A549 (cell line): ENCODE measurements at regions of chr12 and their contacts with region 1.

Region 1: DNA sequence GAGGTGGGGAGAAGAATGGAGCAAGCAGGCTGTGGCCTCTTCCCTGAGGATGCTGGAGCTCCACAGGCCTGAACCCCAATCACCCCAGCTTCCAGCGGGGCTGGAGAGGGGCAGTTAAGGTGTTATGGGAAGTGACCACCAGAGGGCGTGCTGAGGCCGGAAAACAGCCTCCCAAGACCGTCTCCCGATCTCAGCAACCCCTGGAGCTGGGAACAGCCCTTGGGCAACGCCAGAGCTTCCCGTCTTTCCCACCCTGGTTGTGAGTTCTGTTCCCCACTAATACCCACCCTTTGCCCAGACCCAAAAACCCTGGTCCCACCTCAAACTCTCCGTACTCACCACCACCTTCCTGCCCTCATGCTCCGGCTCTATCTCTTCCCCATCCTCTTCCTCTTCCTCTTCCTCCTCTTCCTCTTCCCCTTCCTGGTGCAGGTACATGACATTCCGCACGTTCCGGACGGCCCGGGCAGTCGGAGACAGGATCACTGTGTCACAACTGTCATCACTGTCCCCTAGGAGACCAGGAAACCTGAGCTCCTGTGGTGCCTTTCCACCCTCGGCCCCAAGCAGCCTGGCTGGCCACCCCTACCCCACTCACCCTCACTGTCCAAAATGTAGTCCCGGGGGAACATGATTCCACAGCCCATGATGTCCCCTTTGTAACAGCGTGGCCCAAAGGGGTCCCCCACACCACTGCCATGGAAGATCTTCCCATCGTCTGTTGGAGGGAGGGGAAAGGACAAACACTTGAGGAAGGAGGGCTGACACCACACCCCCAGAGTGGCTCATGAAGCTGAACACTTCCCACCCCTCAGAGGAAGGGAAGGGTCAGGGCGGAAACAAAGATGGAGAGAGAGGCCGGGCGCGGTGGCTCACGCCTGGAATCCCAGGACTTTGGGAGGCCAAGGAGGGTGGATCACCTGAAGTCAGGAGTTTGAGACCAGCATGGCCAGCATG is 12.9 kb downstream of the SPRYD3 start:
- DNase-seq: peak; percentile 80 to 96
- ATAC-seq: peak; percentile 56 to 84
- H3K4me3 ChIP-seq: no peak overlapping the region
- H3K27ac ChIP-seq: peak overlapping the region; percentile 65 to 87
- H3K4me1 ChIP-seq: peaks cover 36% of the 10 kb centered on the region
- CTCF ChIP-seq: peak; percentile 96
- EP300 ChIP-seq: no peak
- POLR2A ChIP-seq: no peak
- RAD21 ChIP-seq: peak; percentile 95 to 98

Region 2: DNA sequence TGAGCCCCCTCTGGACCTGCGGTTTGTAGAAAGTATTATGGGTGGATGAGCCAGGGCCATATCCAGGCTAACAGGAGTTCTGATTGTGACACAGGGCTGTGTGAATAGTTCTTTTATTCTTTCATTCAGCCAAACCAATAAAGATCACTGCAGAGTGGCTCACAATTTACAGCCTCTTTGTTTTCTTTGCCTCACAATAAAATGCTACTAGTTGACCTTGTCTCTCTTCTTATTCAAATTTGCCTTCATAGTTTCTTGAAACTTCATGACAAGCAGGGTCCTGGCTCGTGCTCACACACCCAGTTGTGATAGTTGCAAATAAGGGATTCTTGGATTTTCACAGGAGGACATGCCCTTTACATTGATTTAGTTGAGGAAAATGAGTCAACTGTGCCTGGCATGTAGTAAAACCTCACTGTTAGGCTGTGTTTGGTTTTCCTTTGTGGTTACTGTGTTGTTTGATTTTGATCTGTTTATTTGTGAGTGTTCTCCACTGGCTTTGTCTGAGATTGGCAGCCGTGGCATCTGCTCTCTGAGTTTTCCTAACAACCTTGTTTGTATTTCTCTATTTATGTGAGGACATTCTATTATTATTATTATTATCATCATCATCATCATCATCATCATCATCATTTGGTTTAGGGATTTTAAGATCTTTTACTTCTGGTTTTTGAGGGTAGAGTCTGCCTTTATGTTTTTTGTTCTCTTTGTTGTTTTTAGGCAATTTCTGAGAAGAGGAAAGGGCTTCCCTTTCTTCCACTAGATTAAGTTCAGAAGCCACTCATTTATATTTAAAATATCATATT is 611.6 kb before region 1 on chr12:
- CTCF ChIA-PET with region 1: no interaction called
- POLR2A ChIA-PET with region 1: no interaction called
- DNase-seq: no peak
- ATAC-seq: 0 out of 6 replicates have a peak, but pooled peaks of 1 of the 2 experiments have one; percentile 24
- H3K4me3 ChIP-seq: no peak overlapping the region
- H3K27ac ChIP-seq: no peak overlapping the region
- H3K4me1 ChIP-seq: peaks cover 5% of the 10 kb centered on the region; the same call in 1 of the 3 replicates
- CTCF ChIP-seq: no peak
- EP300 ChIP-seq: no peak
- POLR2A ChIP-seq: no peak
- RAD21 ChIP-seq: no peak

Region 3: DNA sequence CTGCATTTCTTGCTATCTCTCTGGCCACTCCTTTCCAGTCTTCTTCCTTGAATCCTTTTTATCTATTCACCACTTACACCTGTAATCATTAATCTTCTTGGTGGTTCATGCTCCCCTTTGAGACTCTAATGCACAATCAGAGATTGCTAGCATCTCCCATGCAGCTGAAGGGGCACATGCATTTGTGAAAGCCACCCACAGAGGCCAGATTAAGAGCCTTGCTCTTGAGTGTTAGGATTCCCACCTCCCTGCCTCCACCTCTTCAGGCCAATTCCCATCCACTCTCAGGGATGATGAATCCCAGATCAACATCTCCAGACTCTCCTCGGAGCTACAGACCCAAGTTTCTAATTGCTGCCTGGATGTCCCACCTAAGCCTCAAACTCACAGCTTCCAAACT is 136.7 kb before region 1 on chr12:
- CTCF ChIA-PET with region 1: no interaction called
- POLR2A ChIA-PET with region 1: no interaction called
- DNase-seq: no peak
- ATAC-seq: no peak
- H3K4me3 ChIP-seq: no peak overlapping the region
- H3K27ac ChIP-seq: peak overlapping the region; percentile 54 to 96; a peak in 5 of 6 replicates
- H3K4me1 ChIP-seq: peaks cover 51% of the 10 kb centered on the region
- CTCF ChIP-seq: no peak
- EP300 ChIP-seq: no peak
- POLR2A ChIP-seq: no peak
- RAD21 ChIP-seq: no peak

Region 4: DNA sequence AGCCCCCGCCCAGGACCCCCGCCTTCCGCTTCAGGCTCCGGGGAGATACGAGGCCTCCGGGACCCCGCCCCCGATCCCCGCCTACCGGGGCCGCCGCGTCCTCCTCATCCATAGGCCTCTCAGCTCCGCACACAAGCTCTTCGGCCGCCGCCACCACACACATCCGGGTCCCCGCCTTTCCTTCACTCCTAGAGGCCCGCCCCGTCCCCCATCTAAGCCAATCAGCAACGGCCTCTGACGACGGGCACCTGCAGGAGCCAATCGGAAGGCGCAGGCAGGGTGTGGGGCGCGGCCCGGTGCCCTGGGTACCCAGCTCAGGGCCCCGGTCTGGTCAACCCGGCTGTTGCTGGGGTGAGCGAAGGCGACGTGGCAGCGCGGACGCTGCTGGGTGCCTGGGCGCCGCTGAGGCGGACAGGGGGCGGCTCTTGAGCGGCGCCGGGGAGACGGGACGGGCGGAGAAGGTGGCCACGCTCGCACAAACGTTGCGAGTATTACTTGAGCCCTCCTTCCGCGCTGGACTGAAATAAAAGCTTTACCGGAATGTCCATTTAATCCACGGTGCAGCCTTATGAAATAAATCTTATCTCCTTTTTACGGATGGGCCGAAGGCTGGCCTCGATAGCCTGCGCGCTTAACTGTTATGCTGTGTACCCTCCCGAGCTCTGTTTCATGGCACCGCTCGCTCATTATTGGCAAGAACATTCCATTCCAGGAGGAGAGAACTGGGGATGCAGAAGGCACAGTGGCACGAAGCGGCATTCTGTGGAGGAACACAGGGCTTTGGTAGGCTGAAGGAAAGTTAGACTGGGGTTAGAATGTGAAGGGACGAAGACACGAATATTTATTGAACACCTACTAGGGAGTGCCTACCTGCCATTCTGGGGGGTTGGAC is 13.2 kb after region 1 on chr12 and contains the start of gene SPRYD3:
- CTCF ChIA-PET with region 1: interaction called, 1,424 read pairs
- POLR2A ChIA-PET with region 1: interaction called, 13 read pairs
- DNase-seq: peak; percentile 99 to 100
- ATAC-seq: peak; percentile 98 to 99
- H3K4me3 ChIP-seq: peak within 1 kb of the TSS; percentile 56
- H3K27ac ChIP-seq: peak within 1 kb of the TSS; percentile 86 to 94
- H3K4me1 ChIP-seq: peaks cover 10% of the 10 kb centered on the region; the same call in 2 of the 3 replicates
- CTCF ChIP-seq: no peak
- EP300 ChIP-seq: no peak
- POLR2A ChIP-seq: peak; percentile 99
- RAD21 ChIP-seq: no peak
- polyA plus RNA-seq, gene SPRYD3: 26.8 and 28.1 TPM in 2 replicates

Region 5: DNA sequence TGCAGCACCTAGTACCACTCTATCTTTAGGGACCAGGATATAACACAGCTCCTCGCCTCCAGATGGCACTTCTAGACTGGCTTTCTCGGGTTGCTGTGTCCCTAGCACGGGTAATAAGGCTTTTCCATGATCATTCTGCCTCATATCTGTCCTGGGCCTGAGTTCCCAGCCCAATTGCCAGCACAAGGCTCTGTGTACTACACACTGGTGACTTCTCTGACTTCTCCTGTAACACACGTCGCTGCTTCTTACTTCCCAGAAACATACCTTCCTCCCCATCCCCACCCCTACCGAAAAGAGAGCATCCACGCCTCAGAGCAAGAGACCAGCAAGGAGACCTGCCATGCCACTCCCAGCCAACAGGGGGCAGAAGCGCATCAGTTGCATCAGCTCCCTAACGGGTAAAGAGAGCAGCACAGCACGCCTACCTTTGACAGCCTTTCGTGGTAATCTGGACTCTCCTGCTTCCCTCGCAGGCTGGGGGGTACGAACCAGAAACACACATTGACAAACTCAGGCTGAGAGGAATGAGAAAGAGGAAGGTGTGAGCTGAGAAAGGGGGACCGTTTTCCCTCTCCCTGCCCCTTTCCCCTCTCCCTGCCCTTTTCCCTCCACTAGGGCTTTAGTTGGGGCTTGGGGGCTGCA is 93.1 kb after region 1 on chr12:
- CTCF ChIA-PET with region 1: interaction called, 42 read pairs
- POLR2A ChIA-PET with region 1: no interaction called
- DNase-seq: peak; percentile 89 to 96
- ATAC-seq: peak; percentile 97 to 98
- H3K4me3 ChIP-seq: no peak overlapping the region
- H3K27ac ChIP-seq: peak overlapping the region; percentile 55 to 82
- H3K4me1 ChIP-seq: peaks cover 12% of the 10 kb centered on the region
- CTCF ChIP-seq: peak; percentile 93
- EP300 ChIP-seq: no peak
- POLR2A ChIP-seq: no peak
- RAD21 ChIP-seq: peak; percentile 89 to 93

Region 6: DNA sequence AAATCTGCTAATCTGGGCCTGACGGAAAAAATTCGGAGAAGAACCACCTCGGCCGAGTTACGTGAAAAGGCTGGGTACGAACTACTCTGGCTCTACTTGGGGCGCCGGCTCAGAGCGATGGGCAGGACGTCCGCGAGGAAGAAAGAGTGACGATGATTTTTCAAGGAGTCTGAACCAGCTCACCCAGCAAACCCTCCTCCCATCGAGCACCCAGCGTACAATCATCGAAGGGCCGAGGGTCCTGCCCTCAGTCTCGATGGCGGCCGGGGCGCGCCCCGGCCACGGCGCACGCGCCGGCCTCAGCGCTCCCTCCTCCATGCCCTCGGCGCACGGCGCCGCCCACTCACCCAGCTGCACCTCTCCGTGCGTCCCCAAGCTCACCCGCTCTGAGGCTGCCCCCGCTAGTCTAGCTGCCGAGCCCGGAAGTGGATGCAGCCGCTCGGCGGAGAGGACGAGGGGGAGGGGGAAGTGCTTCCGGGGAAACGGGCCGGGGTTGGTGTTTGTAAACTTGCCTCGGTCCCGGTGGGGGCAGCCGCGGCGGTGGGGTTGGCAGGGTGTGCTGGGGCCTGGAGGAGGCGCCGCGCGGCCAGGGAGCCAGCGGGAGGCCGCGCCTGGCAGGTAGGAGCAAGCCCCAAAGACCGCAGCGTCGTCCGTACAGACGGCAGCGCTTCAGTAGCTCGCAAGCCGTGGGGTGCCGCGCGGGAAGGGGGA is 114.1 kb after region 1 on chr12 and contains the starts of genes CSAD and ZNF740:
- CTCF ChIA-PET with region 1: interaction called, 20 read pairs
- POLR2A ChIA-PET with region 1: interaction called, 4 read pairs
- DNase-seq: peak; percentile 98 to 99
- ATAC-seq: peak; percentile 97 to 98
- H3K4me3 ChIP-seq: peak within 1 kb of the TSS; percentile 76
- H3K27ac ChIP-seq: peak within 1 kb of the TSS; percentile 92 to 93
- H3K4me1 ChIP-seq: peaks cover 39% of the 10 kb centered on the region
- CTCF ChIP-seq: no peak
- EP300 ChIP-seq: no peak; a peak in 1 of 5 replicates
- POLR2A ChIP-seq: peak; percentile 90
- RAD21 ChIP-seq: 0 out of 5 replicates have a peak, but pooled peaks of 1 of the 2 experiments have one; percentile 14
- polyA plus RNA-seq, gene CSAD: 16.5 and 19.2 TPM in 2 replicates
- polyA plus RNA-seq, gene ZNF740: 28.8 and 32.9 TPM in 2 replicates

Region 7: DNA sequence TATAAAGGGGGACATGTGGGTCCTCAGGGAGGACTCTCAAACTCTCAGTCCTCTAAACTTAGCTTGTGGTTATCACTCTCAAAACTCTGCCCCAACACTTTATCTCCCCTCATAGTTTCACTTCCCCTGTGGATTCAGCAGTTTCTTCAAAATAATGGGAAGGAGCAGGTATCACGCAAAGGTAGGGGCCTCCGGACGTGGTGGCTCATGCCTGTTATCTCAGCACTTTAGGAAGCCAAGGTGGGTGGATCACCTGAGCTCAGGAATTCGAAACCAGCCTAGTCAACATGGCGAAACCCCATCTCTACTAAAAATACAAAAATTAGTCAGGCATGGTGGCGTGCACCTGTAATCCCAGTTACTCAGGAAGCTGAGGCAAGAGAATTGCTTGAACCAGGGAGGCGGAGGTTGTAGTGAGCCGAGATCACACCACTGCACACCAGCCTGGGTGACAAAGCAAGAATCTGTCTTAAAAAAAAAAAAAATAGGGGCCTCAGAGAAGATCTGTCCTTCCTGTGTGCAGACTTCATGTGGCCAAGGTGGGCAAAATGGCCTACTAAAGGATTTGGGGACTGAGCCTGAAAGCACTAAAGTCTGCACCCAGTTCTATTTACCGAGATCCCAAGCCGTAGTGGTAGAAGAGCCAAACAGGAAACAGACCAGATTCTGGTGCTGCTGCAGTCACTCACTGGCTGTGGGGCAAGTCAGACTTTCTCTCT is 134.4 kb after region 1 on chr12:
- CTCF ChIA-PET with region 1: interaction called, 141 read pairs
- POLR2A ChIA-PET with region 1: interaction called, 9 read pairs
- DNase-seq: no peak
- ATAC-seq: no peak
- H3K4me3 ChIP-seq: no peak overlapping the region
- H3K27ac ChIP-seq: no peak overlapping the region
- H3K4me1 ChIP-seq: peaks cover 21% of the 10 kb centered on the region
- CTCF ChIP-seq: no peak
- EP300 ChIP-seq: no peak
- POLR2A ChIP-seq: no peak
- RAD21 ChIP-seq: no peak

Region 8: DNA sequence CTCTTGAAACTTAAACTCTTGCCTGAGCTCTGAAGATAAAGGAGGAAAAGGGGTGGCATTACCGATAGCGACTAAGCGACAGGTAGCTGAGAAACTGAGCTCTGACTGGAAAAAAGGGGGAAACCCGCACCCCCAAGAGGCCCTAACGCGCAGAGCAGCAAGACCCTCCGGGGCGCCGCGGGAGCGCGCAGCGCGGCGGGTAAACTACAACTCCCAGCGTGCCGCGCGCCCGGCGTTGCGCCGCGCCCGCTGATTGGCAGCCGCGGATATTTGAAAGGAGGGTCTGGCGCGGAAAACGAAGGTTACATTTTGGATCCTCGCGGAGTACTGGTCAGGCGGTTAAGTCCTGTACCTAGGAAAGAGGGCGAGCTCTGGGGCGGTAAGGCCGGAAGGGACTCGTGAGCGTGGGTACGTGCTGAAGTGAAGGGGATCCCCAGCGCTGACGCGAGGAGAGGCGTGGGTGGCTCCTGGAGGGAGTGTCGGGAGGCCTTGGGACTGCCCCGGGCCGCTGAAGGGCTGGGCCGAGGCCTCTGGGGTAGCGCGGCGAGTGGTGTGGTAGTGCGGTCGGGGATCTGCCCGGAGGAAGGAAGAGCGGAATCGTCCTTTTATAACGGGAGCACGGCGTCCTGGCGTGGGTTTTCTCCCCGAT is 201.9 kb after region 1 on chr12 and contains the start of gene ESPL1:
- CTCF ChIA-PET with region 1: interaction called, 14 read pairs
- POLR2A ChIA-PET with region 1: no interaction called
- DNase-seq: peak; percentile 82 to 92
- ATAC-seq: peak; percentile 92 to 94
- H3K4me3 ChIP-seq: peak within 1 kb of the TSS; percentile 65
- H3K27ac ChIP-seq: peak within 1 kb of the TSS; percentile 75 to 90
- H3K4me1 ChIP-seq: peaks cover 12% of the 10 kb centered on the region
- CTCF ChIP-seq: peak; percentile 21; the same call in 1 of the 3 replicates
- EP300 ChIP-seq: no peak
- POLR2A ChIP-seq: no peak
- RAD21 ChIP-seq: peak; percentile 41 to 47; a peak in 3 of 5 replicates
- polyA plus RNA-seq, gene ESPL1: 10.0 and 11.8 TPM in 2 replicates